ENCODE measurements at regions of chrX and their contacts with region 1.

Region 1: GRCh38 chrX:123943488-123943887 is 18.0 kb upstream of the STAG2 start:
- DNase-seq: no peak
- ATAC-seq: no peak

Region 2: GRCh38 chrX:122906726-122907125 is 1036.8 kb before region 1 on chrX:
- intact Hi-C with region 1: loop called (anchors 5 kb)
- DNase-seq: no peak
- ATAC-seq: no peak

Region 3: GRCh38 chrX:123906557-123907316 is 36.8 kb before region 1 on chrX:
- intact Hi-C with region 1: no loop called
- DNase-seq: no peak
- ATAC-seq: no peak